ENCODE measurements at regions of chr11 and their contacts with region 1.

Region 1: DNA sequence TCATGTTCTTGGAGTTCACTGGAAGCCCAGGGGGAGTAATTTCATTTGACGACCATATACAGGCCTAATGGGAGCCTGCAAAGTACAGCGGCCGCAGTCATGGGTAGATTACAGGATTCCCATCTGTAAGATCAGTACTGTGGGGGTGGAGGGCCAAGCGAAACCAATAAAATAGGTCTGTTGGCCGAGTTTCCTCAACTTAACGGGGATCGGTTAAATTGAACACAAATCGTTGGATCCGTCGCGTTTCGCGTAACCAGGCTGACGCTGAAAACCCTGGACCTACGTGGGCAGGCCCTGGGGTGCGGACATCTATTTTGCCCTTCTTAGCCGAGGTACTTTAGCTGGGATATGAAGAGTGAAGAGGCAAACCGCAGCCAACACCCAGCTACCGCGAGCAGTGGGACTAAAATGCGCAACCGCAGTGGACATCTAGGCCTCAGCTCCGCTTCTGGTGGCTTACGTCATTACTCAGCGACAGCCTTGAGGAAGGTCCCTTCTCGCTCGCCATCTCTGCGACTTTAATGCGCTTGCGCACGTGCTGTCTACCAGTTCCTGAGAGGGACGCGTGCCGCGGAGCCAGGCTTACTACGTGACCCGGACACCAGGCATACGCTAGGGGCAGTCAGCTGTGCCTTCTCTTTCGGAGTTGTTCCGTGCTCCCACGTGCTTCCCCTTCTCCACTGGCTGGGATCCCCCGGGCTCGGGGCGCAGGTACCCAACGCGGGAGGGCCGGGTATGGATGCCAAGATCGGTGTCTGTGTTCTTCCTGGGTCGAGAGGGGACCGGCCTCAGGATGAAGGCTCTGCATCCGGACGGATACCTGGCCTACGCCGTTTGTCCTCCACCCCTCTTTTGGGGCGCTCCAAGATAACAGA is at the start of gene NAT10:
- DNase-seq: peak; percentile 98
- H3K4me3 Mint-ChIP-seq: peak within 1 kb of the TSS; percentile 96
- H3K27ac Mint-ChIP-seq: peak within 1 kb of the TSS; percentile 96
- H3K4me1 Mint-ChIP-seq: peaks cover 58% of the 10 kb centered on the region
- H3K27me3 Mint-ChIP-seq: no peaks in the 10 kb centered on the region
- total RNA-seq, gene NAT10: 52.9 to 57.8 TPM

Region 2: GRCh38 chr11:34051349-34052035 is 53.8 kb before region 1 on chr11 and contains the start of gene CAPRIN1:
- CTCF ChIA-PET with region 1: interaction called, 5 read pairs
- POLR2A ChIA-PET with region 1: interaction called, 108 read pairs
- DNase-seq: peak; percentile 85
- H3K4me3 Mint-ChIP-seq: peak within 1 kb of the TSS; percentile 95
- H3K27ac Mint-ChIP-seq: peak within 1 kb of the TSS; percentile 89
- H3K4me1 Mint-ChIP-seq: peaks cover 24% of the 10 kb centered on the region
- H3K27me3 Mint-ChIP-seq: peaks cover 2% of the 10 kb centered on the region
- total RNA-seq, gene CAPRIN1: 191 to 200 TPM

Region 3: DNA sequence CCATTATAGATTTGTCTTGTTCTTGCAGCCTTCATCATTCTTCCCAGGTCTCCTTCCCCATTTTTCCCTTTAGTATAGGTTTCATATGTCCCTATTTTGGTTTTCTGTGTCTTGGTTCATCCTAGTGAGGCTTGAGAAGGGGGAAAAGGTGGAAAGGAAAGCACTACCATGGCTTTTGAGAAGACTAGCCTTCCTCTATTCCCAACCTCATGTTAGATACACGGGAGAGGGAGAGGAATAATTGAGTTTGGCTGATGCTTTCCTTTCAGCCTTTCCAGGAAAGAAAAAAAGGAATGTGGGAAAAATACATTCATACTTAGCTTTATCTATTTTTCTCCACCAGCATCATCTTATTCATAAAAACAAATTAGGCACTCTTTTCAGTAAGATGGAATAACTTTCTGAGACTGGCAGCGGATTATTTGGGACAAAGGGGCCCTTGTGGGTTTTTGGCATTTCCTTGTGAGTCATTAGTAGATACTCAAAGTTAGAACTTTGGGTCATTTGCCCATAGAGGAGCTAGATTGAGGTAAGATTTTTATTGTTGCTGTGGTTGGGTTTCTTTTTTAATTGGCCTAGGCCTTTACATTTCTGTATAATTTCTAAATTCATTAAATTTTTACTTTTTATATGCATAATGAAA is 30.0 kb before region 1 on chr11:
- CTCF ChIA-PET with region 1: no interaction called
- POLR2A ChIA-PET with region 1: interaction called, 15 read pairs
- DNase-seq: no peak
- H3K4me3 Mint-ChIP-seq: no peak overlapping the region
- H3K27ac Mint-ChIP-seq: peak overlapping the region; percentile 50
- H3K4me1 Mint-ChIP-seq: peaks cover 48% of the 10 kb centered on the region
- H3K27me3 Mint-ChIP-seq: no peaks in the 10 kb centered on the region

Region 4: DNA sequence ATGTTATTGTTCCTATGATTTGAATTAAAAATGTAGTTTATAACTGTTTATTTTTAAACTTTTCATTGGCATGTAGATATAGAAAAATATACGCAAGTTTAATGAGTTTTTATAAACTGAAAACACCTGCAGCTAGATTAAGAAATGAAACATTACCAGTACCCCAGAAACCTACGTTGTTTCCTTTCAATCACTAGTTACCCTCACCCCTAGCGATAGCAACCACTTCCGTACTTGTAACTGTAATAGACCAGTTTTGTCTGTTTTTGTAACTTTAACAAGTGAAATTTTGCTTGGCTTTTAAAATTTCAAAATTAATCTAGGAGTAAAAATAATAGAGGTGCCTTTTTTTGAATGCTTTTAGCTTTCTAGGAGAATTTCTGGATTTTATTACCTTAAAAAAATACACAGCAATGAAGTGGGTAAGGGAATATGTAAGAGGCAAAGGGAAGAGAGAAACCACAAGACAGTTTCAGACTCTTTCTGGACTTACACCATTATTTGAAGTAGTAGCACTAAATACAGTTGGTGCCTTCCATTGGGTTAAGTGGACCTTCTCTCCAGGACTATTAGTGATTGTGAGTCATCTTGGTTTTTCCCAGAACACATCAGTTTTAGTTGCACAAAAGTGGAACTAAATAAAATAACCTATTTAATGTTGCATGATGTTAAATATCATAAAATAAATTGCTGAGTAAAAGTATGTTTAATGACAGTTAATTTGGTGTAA is 18.6 kb before region 1 on chr11:
- CTCF ChIA-PET with region 1: interaction called, 3 read pairs
- POLR2A ChIA-PET with region 1: interaction called, 54 read pairs
- DNase-seq: no peak
- H3K4me3 Mint-ChIP-seq: peak overlapping the region; percentile 45
- H3K27ac Mint-ChIP-seq: peak overlapping the region; percentile 92
- H3K4me1 Mint-ChIP-seq: peaks cover 26% of the 10 kb centered on the region
- H3K27me3 Mint-ChIP-seq: no peaks in the 10 kb centered on the region

Region 5: GRCh38 chr11:34091825-34092224 is 13.5 kb before region 1 on chr11:
- CTCF ChIA-PET with region 1: interaction called, 3 read pairs
- POLR2A ChIA-PET with region 1: interaction called, 54 read pairs
- DNase-seq: no peak
- H3K4me3 Mint-ChIP-seq: no peak overlapping the region
- H3K27ac Mint-ChIP-seq: no peak overlapping the region
- H3K4me1 Mint-ChIP-seq: peaks cover 12% of the 10 kb centered on the region
- H3K27me3 Mint-ChIP-seq: no peaks in the 10 kb centered on the region

Region 6: DNA sequence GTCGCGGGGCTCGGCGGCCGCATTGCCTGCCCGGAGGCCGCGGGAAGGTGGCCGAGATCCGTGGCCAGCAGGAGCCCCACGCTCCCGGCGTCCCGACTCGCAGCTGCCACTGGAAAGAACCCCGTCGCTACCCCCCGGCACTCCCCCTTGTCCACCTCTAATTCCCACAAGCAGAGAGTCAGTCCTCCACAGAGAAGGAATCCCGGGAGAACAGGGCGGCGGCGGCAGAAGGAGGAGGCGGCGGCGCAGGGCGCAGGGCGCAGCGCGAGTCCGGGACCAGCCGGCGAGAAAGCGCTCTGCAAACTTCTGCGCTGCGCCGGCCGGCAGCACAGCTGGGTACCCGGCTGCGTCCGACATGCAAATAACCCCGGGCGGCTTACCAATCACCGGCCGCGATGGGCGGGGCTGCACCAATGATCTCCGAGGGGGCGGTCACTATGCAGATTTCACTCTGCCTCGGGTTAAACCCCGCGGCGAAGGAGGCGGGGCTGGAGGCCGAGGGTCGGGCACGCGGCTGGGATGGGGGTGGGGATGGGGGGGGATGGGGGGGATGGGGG is 252.5 kb after region 1 on chr11 and contains the start of gene ABTB2:
- CTCF ChIA-PET with region 1: interaction called, 3 read pairs
- POLR2A ChIA-PET with region 1: interaction called, 28 read pairs
- DNase-seq: peak; percentile 98
- H3K4me3 Mint-ChIP-seq: peak within 1 kb of the TSS; percentile 74
- H3K27ac Mint-ChIP-seq: peak within 1 kb of the TSS; percentile 74
- H3K4me1 Mint-ChIP-seq: peaks cover 29% of the 10 kb centered on the region
- H3K27me3 Mint-ChIP-seq: peaks cover 46% of the 10 kb centered on the region
- total RNA-seq, gene ABTB2: 2.3 to 2.7 TPM